CD8-positive, alpha-beta T cell (primary cell): ENCODE measurements at regions of chr17 and their contacts with region 1.

Region 1: DNA sequence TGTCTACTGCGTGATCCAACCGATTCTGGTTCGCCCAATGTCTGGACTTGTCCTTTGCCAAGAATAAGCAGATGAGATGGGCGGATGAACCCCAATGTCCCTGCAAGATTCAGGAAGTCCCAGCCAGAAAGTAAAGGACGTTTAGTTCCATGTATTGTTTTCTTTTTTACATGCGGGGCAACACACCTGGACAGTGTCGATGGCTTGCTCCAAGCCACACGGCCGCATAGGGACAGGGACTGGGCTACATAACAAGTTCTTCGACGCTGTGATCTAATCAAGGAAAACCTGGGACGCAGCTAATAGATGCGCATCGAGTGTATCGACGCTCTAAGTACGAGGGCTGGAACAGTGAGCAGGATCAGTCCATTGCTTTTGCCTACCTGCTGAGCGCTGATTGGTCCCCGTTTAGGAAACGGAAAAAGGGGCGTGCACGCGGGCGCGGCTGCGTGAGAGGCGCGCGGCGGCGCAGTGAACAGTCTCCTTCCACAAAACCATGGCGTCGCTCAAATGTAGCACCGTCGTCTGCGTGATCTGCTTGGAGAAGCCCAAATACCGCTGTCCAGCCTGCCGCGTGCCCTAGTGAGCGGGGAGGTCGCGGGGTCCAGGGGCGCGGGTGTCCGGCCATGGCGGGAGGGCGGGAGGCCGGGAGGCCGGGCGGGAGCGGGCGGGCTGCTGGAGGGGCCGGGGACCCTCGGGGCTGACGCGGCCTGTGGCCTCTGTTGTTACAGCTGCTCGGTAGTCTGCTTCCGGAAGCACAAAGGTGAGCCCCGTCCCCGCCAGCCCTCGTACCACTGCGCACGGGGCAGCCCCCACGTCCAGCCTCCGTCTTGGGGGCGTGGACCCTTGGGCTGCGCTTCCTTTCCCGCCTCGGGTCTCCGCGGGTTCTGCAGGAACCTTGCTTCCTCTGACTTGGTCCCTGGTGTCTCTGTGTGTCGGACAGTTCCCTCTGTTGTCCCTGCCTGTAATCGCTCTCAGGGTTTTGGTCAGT is at the start of gene ZNHIT3:
- DNase-seq: peak; percentile 80 to 96 (median 90)
- ATAC-seq: peak; percentile 96
- H3K4me3 ChIP-seq: peak within 1 kb of the TSS; percentile 64 to 97
- H3K4me3 Mint-ChIP-seq: peak within 1 kb of the TSS; percentile 100
- H3K27ac ChIP-seq: peak within 1 kb of the TSS; percentile 69 to 70
- H3K27ac Mint-ChIP-seq: peak within 1 kb of the TSS; percentile 99
- H3K4me1 ChIP-seq: peaks cover 45% of the 10 kb centered on the region
- H3K4me1 Mint-ChIP-seq: peaks cover 55% of the 10 kb centered on the region
- H3K27me3 ChIP-seq: peaks cover 0 to 10% of the 10 kb centered on the region in 2 experiments
- H3K27me3 Mint-ChIP-seq: peaks cover 10% of the 10 kb centered on the region
- CTCF ChIP-seq: no peak
- total RNA-seq, gene ZNHIT3: 82.2 to 87.1 TPM

Region 2: DNA sequence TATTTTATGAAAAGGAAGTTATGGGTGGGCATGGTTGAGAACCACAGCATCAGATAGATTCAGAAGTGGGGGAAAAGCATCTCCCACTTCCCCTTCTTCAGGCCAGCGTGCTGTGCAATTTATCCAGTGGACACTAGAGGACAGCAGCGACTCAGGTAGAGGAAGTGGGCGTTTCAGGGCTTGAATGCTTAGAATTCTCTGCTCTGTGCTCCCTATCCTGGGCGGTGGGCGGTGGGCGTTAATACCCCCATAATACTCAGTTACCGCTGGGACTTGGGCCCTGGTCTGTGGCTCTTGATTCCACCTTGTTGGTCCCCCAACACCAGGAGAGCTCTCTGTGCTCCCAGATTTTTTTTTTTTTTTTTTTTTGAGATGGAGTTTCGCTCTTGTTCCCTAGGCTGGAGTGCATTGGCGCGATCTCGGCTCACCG is 539.3 kb before region 1 on chr17:
- CTCF ChIA-PET with region 1: interaction called, 4 read pairs
- POLR2A ChIA-PET with region 1: no interaction called
- intact Hi-C with region 1: loop called (anchors 2 to 5 kb)
- DNase-seq: peak; percentile 25 to 76 (median 48)
- ATAC-seq: peak; percentile 91
- H3K4me3 ChIP-seq: no peak overlapping the region
- H3K4me3 Mint-ChIP-seq: no peak overlapping the region
- H3K27ac ChIP-seq: no peak overlapping the region
- H3K27ac Mint-ChIP-seq: no peak overlapping the region
- H3K4me1 ChIP-seq: peaks cover 3% of the 10 kb centered on the region
- H3K4me1 Mint-ChIP-seq: peaks cover 9% of the 10 kb centered on the region
- H3K27me3 ChIP-seq: no peaks in the 10 kb centered on the region
- H3K27me3 Mint-ChIP-seq: no peaks in the 10 kb centered on the region
- CTCF ChIP-seq: peak; percentile 72

Region 3: GRCh38 chr17:35969558-35970380 is 516.7 kb before region 1 on chr17:
- CTCF ChIA-PET with region 1: interaction called, 6 read pairs
- POLR2A ChIA-PET with region 1: no interaction called
- intact Hi-C with region 1: loop called in 1 of 2 experiments (anchors 1 kb)
- DNase-seq: peak; percentile 49 to 84 (median 74)
- ATAC-seq: peak; percentile 46
- H3K4me3 ChIP-seq: no peak overlapping the region
- H3K4me3 Mint-ChIP-seq: no peak overlapping the region
- H3K27ac ChIP-seq: no peak overlapping the region
- H3K27ac Mint-ChIP-seq: peak overlapping the region; percentile 4
- H3K4me1 ChIP-seq: no peaks in the 10 kb centered on the region
- H3K4me1 Mint-ChIP-seq: no peaks in the 10 kb centered on the region
- H3K27me3 ChIP-seq: no peaks in the 10 kb centered on the region
- H3K27me3 Mint-ChIP-seq: no peaks in the 10 kb centered on the region
- CTCF ChIP-seq: peak; percentile 80

Region 4: GRCh38 chr17:36545465-36546417 is 59.2 kb after region 1 on chr17:
- CTCF ChIA-PET with region 1: interaction called, 4 read pairs
- POLR2A ChIA-PET with region 1: interaction called, 3 read pairs
- intact Hi-C with region 1: loop called (anchors 2 kb)
- DNase-seq: peak; percentile 92 to 99 (median 97)
- ATAC-seq: peak; percentile 76
- H3K4me3 ChIP-seq: peak overlapping the region; percentile 66 to 94
- H3K4me3 Mint-ChIP-seq: peak overlapping the region; percentile 95
- H3K27ac ChIP-seq: peak overlapping the region; percentile 67 to 96
- H3K27ac Mint-ChIP-seq: peak overlapping the region; percentile 96
- H3K4me1 ChIP-seq: peaks cover 44% of the 10 kb centered on the region
- H3K4me1 Mint-ChIP-seq: peaks cover 50% of the 10 kb centered on the region
- H3K27me3 ChIP-seq: no peaks in the 10 kb centered on the region
- H3K27me3 Mint-ChIP-seq: no peaks in the 10 kb centered on the region
- CTCF ChIP-seq: no peak